PC-9 (cell line): ENCODE measurements at regions of chr19 and their contacts with region 1.

Region 1: DNA sequence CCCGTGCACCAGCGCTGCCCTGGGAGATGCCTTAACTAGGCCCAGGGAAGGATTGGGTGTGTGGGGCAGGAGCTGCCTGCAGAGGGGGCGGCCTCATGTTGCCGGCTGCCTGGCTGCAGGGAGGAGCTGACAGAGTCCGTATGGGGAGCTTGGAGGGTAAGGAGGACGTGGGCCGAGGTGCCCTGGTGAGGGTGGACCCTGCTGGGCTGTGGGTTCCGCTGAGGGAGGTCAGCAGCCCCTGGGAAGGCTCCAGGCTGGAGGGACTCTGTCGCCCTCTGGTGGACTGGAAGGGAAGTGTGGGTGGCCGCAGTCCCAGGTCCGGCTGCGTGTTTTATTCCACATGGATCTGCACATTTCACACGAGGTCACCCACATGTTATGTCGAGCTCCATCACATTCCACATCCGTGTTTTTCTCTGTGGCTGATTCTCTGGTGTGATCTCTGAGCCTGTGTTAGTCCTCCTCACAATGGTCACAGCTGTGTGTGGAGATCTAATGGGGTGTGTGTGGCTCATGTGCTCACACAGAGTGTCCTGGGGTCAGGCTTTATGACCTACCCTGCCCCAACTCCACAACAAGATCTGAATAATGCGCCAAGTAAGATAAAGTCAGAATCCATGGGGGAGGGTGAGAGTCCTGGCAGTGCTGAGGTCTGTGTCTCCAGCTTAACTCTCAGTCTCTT is 1.8 kb upstream of the CEACAM8 start:
- DNase-seq: peak in 1 of 2 experiments; percentile 42
- H3K4me3 ChIP-seq: no peak overlapping the region
- H3K27ac ChIP-seq: no peak overlapping the region
- H3K4me1 ChIP-seq: no peaks in the 10 kb centered on the region
- H3K27me3 ChIP-seq: peaks cover 21% of the 10 kb centered on the region
- CTCF ChIP-seq: peak; percentile 96

Region 2: GRCh38 chr19:42433503-42434260 is 162.8 kb before region 1 on chr19:
- CTCF ChIA-PET with region 1: interaction called, 11 read pairs
- POLR2A ChIA-PET with region 1: no interaction called
- intact Hi-C with region 1: no loop called
- DNase-seq: peak; percentile 55 to 76
- H3K4me3 ChIP-seq: no peak overlapping the region
- H3K27ac ChIP-seq: peak overlapping the region; percentile 45
- H3K4me1 ChIP-seq: peaks cover 9% of the 10 kb centered on the region
- H3K27me3 ChIP-seq: no peaks in the 10 kb centered on the region
- CTCF ChIP-seq: peak; percentile 78

Region 3: DNA sequence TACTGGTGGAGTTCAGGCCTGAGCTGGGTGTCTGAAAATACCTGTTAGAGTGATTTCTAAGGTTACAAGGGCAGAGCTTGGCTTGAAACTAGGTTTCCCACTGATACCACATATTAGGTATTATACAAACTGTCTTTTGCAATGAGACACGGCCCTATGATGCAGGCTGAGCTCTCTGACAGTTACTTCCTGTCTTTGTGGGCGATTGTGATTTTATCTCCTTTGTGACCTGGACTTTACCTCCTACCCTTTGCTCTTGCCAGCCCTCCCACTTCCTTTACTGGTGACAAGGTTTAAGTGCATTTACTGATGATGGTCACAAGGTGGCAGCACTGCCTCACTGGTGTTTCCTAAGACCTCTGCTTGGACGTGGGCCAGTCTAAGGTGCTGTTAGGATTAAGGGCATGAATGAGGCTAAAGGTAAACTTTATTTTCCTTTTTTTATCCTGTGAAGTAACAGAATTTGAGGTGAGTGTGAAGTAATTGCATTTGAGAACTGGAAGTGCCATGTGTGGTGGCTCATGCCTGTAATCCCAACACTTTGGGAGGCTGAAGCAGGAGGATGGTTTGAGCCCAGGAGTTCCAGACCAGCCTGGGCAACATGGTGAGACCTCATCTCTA is 146.1 kb before region 1 on chr19:
- CTCF ChIA-PET with region 1: interaction called, 3 read pairs
- POLR2A ChIA-PET with region 1: no interaction called
- intact Hi-C with region 1: loop called (anchors 1 kb)
- DNase-seq: peak; percentile 78 to 95
- H3K4me3 ChIP-seq: no peak overlapping the region
- H3K27ac ChIP-seq: peak overlapping the region; percentile 89
- H3K4me1 ChIP-seq: peaks cover 47% of the 10 kb centered on the region
- H3K27me3 ChIP-seq: no peaks in the 10 kb centered on the region
- CTCF ChIP-seq: peak; percentile 92

Region 4: GRCh38 chr19:42683917-42684513 is 87.5 kb after region 1 on chr19:
- CTCF ChIA-PET with region 1: interaction called, 10 read pairs
- POLR2A ChIA-PET with region 1: no interaction called
- intact Hi-C with region 1: no loop called
- DNase-seq: no peak
- H3K4me3 ChIP-seq: no peak overlapping the region
- H3K27ac ChIP-seq: no peak overlapping the region
- H3K4me1 ChIP-seq: no peaks in the 10 kb centered on the region
- H3K27me3 ChIP-seq: peaks cover 14% of the 10 kb centered on the region
- CTCF ChIP-seq: peak; percentile 92